K562 (cell line): ENCODE measurements at regions of chr4 and their contacts with region 1.

Region 1: GRCh38 chr4:147617173-147617840 is at the start of gene TMEM184C:
- DNase-seq: peak; percentile 97 to 99 (median 98)
- ATAC-seq: peak; percentile 98
- H3K4me3 ChIP-seq: peak within 1 kb of the TSS; percentile 72
- H3K27ac ChIP-seq: peak within 1 kb of the TSS; percentile 82
- H3K4me1 ChIP-seq: peaks cover 0 to 14% of the 10 kb centered on the region in 2 experiments; a peak in 2 of 5 replicates
- H3K27me3 ChIP-seq: no peaks in the 10 kb centered on the region
- CTCF ChIP-seq: 0 out of 6 replicates have a peak, but pooled peaks of 1 of the 3 experiments have one; percentile 17
- EP300 ChIP-seq: no peak
- POLR2A ChIP-seq: peak; percentile 89
- RAD21 ChIP-seq: no peak
- polyA plus RNA-seq, gene TMEM184C: 3.9 to 4.8 TPM

Region 2: GRCh38 chr4:146522098-146522868 is 1095.0 kb before region 1 on chr4:
- CTCF ChIA-PET with region 1: no interaction called
- POLR2A ChIA-PET with region 1: no interaction called
- in situ Hi-C with region 1: no loop called
- intact Hi-C with region 1: loop called (anchors 10 kb)
- DNase-seq: peak; percentile 82 to 92 (median 86)
- ATAC-seq: peak; percentile 84
- H3K4me3 ChIP-seq: peak overlapping the region; percentile 85
- H3K27ac ChIP-seq: peak overlapping the region; percentile 95
- H3K4me1 ChIP-seq: peaks cover 16 to 18% of the 10 kb centered on the region in 2 experiments; a peak in 4 of 5 replicates
- H3K27me3 ChIP-seq: no peaks in the 10 kb centered on the region
- CTCF ChIP-seq: no peak
- EP300 ChIP-seq: no peak
- POLR2A ChIP-seq: peak; percentile 69
- RAD21 ChIP-seq: no peak